K562 (cell line): ENCODE measurements at regions of chr22 and their contacts with region 1.

Region 1: DNA sequence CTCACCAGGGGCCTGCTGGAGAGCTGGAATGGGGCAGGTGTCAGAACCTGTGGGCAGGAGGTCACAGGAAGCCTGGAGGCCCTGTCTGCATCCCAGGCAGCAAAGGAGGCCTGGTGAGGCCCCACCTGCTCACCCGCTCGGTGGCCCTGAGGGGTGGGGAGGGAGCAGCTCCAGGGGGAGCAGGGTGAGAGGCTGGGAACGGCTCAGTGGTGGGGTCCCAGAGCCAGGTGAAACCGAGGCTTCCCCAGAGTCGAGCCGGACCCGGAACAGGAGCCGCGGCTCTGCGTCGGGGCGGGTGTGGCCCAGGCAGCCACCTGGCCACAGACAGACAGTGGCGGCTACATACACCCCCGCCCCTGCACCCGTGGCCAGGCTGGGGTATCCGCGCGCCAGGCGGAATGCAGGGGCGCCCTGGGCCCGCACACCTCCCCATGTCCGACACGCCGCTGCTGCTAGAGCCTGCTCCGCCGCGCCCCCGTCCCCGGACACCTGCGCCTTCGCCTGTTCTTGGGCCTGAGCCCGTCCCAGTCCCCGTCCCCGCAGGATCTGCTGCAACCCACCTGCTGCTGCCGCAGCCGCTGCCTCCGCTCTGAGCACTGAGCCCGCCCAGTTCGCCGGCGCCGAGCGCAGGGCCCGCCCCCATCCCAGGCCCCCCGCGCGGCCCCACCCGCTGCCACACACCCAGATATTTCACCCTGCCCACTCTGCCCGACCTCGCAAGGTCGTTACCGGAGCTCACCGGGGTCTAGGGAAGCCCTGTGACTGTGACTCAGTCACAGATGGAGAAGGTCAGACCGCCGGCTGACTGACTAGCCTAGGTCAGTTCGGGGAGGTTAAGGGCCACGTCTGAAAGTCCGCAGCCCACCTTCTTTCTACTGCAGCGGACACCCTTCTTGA is at the start of gene SLC7A4:
- DNase-seq: peak in 2 of 4 experiments; percentile 85 to 88
- ATAC-seq: peak; percentile 26
- H3K4me3 ChIP-seq: no peak within 1 kb of the TSS
- H3K27ac ChIP-seq: no peak within 1 kb of the TSS
- H3K4me1 ChIP-seq: peaks cover under 1 to 44% of the 10 kb centered on the region in 2 experiments; a peak in 4 of 5 replicates
- H3K27me3 ChIP-seq: peaks cover 37 to 62% of the 10 kb centered on the region in 2 experiments; a peak in 4 of 5 replicates
- CTCF ChIP-seq: no peak
- EP300 ChIP-seq: no peak
- POLR2A ChIP-seq: no peak
- RAD21 ChIP-seq: no peak
- polyA plus RNA-seq, gene SLC7A4: not detected

Region 2: DNA sequence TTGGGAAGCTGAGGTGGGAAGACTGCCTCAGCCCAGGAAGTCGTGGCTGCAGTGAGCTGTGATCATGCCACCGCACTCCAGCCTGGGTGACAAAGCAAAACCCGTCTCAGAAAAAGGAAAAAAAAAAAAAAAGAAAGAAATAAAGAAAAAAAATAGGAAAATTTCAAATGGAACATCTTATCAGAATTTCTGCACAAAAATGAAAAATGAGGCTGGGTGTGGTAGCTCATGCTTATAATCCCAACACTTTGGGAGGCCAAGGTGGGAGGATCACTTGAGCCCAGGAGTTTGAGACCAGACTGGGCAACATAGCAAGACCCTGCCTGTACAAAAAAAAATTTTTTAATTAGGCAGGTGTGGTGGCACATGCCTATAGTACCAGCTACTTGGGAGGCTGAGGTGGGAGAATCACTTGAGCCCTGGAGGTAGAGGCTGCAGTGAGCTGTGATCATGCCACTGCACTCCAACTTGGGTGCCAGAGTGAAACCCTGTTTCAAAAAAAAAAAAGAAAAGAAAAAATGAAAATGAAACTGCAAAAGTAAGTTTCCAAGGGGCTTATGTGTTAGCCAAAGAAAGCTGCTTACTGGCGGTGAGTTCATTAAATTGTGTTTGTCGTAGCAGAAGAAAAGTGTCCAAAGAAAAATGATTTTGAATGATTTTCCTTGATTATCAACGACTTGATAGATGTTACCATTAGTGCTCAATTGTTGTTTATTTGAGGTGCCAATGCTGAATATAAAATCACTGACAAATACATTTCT is 122.5 kb before region 1 on chr22:
- CTCF ChIA-PET with region 1: no interaction called
- POLR2A ChIA-PET with region 1: no interaction called
- in situ Hi-C with region 1: no loop called
- intact Hi-C with region 1: no loop called
- DNase-seq: no peak
- ATAC-seq: no peak
- H3K4me3 ChIP-seq: no peak overlapping the region
- H3K27ac ChIP-seq: no peak overlapping the region
- H3K4me1 ChIP-seq: peaks cover 0 to 7% of the 10 kb centered on the region in 2 experiments; a peak in 2 of 5 replicates
- H3K27me3 ChIP-seq: peaks cover 4 to 14% of the 10 kb centered on the region in 2 experiments
- CTCF ChIP-seq: no peak
- EP300 ChIP-seq: no peak
- POLR2A ChIP-seq: no peak
- RAD21 ChIP-seq: no peak

Region 3: DNA sequence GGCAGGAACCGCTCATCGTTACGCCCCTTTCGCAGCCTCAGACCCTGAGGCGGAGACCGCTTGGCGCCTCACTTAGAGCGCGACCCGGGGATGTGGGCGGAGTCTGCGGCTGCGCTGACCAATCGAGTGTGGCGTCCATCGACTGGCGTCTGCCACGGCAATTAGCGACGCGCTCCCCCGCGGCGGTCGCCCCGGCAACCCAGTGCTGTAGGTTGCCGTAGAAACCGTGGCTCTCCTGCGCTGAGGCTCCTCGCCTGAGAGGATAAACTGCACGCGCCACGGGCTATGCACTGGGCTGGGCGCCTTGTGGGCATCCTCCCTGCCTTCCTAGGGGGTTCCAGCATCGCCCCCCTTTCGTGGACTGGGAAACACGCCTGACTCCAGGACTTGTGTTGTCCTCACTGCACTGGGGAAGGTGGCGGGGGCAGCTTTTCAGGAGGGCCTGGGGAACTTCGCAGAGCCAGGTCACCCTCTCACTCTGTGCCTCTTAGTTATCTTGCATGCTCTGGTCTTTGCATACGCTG is 18.0 kb before region 1 on chr22:
- CTCF ChIA-PET with region 1: no interaction called
- POLR2A ChIA-PET with region 1: interaction called, 95 read pairs
- in situ Hi-C with region 1: no loop called
- intact Hi-C with region 1: no loop called
- DNase-seq: peak; percentile 100
- ATAC-seq: peak; percentile 91
- H3K4me3 ChIP-seq: peak overlapping the region; percentile 44
- H3K27ac ChIP-seq: peak overlapping the region; percentile 67
- H3K4me1 ChIP-seq: peaks cover 26 to 46% of the 10 kb centered on the region in 2 experiments
- H3K27me3 ChIP-seq: no peaks in the 10 kb centered on the region; a peak in 1 of 5 replicates
- CTCF ChIP-seq: no peak; a peak in 1 of 6 replicates
- EP300 ChIP-seq: peak; percentile 75
- POLR2A ChIP-seq: no peak
- RAD21 ChIP-seq: no peak